ENCODE measurements at regions of chr2 and their contacts with region 1.

Region 1: DNA sequence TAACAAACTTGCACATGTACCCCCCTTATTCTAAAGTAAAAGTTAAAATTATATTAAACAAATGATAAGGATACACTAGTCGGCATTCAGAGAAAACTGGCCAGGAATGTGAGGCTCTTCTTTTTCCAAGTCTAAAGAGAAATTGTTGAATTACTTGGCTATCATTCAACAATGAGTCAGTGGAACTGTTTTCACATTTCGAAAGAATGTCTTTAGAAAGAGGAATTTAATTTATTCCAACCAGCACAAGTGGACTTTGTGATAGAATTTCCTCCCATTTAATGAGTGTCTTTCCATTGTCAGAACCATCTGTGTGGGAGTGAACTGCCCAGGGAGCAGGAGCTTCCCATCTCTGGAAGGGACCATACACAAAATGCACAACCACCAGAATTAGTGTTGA is 792.2 kb downstream of the EPHA4 start:
- DNase-seq: peak; percentile 92
- ATAC-seq: peak; percentile 65
- H3K4me3 ChIP-seq: no peak overlapping the region
- H3K27ac ChIP-seq: peak overlapping the region; percentile 82; the same call in 1 of the 2 replicates
- H3K4me1 ChIP-seq: peaks cover 16% of the 10 kb centered on the region
- H3K27me3 ChIP-seq: no peaks in the 10 kb centered on the region
- CTCF ChIP-seq: no peak
- POLR2A ChIP-seq: no peak
- RAD21 ChIP-seq: no peak

Region 2: GRCh38 chr2:220959391-220959802 is 179.5 kb after region 1 on chr2:
- CTCF ChIA-PET with region 1: no interaction called
- POLR2A ChIA-PET with region 1: no interaction called
- dilution Hi-C with region 1: no loop called
- in situ Hi-C with region 1: no loop called
- intact Hi-C with region 1: loop called (anchors 10 kb)
- DNase-seq: peak; percentile 7
- ATAC-seq: peak; percentile 44
- H3K4me3 ChIP-seq: no peak overlapping the region
- H3K27ac ChIP-seq: no peak overlapping the region
- H3K4me1 ChIP-seq: no peaks in the 10 kb centered on the region
- H3K27me3 ChIP-seq: peaks cover 6% of the 10 kb centered on the region
- CTCF ChIP-seq: no peak
- POLR2A ChIP-seq: no peak
- RAD21 ChIP-seq: no peak

Region 3: GRCh38 chr2:221060376-221060775 is 280.4 kb after region 1 on chr2:
- CTCF ChIA-PET with region 1: no interaction called
- POLR2A ChIA-PET with region 1: no interaction called
- dilution Hi-C with region 1: no loop called
- in situ Hi-C with region 1: no loop called
- intact Hi-C with region 1: loop called (anchors 10 kb)
- DNase-seq: peak; percentile 78
- ATAC-seq: peak; percentile 81
- H3K4me3 ChIP-seq: no peak overlapping the region
- H3K27ac ChIP-seq: no peak overlapping the region
- H3K4me1 ChIP-seq: no peaks in the 10 kb centered on the region
- H3K27me3 ChIP-seq: no peaks in the 10 kb centered on the region; the same call in 1 of the 2 replicates
- CTCF ChIP-seq: no peak
- POLR2A ChIP-seq: no peak
- RAD21 ChIP-seq: no peak

Measured in IMR-90 (cell line).